Upper lobe of right lung (tissue), 1 donor: ENCODE measurements at regions of chr9 and their contacts with region 1.

Region 1: GRCh38 chr9:114653556-114654159 is 3.9 kb downstream of the TEX53 start:
- DNase-seq: no peak
- ATAC-seq: peak; percentile 95
- H3K4me3 ChIP-seq: no peak overlapping the region
- H3K27ac ChIP-seq: no peak overlapping the region
- H3K4me1 ChIP-seq: no peaks in the 10 kb centered on the region
- H3K27me3 ChIP-seq: no peaks in the 10 kb centered on the region
- CTCF ChIP-seq: peak; percentile 88

Region 2: GRCh38 chr9:114405294-114406034 is 248.2 kb before region 1 on chr9:
- intact Hi-C with region 1: loop called (anchors 5 kb)
- DNase-seq: peak; percentile 82
- ATAC-seq: peak; percentile 93
- H3K4me3 ChIP-seq: no peak overlapping the region
- H3K27ac ChIP-seq: no peak overlapping the region
- H3K4me1 ChIP-seq: no peaks in the 10 kb centered on the region
- H3K27me3 ChIP-seq: no peaks in the 10 kb centered on the region
- CTCF ChIP-seq: peak; percentile 83

Region 3: GRCh38 chr9:114499528-114499927 is 154.1 kb before region 1 on chr9:
- intact Hi-C with region 1: loop called (anchors 10 kb)
- DNase-seq: no peak
- ATAC-seq: no peak
- H3K4me3 ChIP-seq: no peak overlapping the region
- H3K27ac ChIP-seq: no peak overlapping the region
- H3K4me1 ChIP-seq: peaks cover 5% of the 10 kb centered on the region
- H3K27me3 ChIP-seq: peaks cover 4% of the 10 kb centered on the region
- CTCF ChIP-seq: no peak